Heart left ventricle (tissue), 16 donors: ENCODE measurements at regions of chr13 and their contacts with region 1.

Region 1: DNA sequence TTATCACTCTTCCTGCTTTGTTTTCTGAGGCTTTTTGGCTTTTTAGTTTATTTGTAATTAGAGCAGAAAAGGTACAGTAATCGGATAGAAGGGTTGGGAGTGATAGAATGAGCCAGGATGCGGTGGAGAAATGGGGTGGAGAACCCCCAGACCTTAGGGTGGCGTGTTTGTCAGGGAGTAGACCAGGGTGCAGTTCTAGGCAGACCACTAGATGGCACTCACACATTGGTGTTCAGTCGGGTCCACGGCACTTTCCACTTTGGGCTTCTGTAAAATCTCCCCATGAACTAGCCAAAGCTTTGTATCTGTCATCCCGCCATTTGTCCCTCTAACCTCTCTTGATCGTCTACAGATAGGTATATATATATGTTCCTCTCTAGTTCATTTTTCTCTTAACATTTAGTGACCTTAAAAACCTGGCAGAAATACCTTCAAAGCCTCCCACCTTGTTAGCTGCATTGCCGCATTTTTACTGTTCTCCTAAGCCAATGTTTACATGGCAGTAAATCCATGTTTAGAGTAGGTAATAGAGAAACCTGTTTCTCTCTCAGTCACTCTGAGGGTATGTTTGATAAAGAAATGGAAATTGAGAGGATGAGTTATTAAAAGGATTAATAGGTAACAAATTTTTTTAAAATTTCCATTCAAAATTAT is 154.9 kb downstream of the TM9SF2 start:
- DNase-seq: peak; percentile 61 to 75 (median 71)
- ATAC-seq: peak in 3 of 4 donors; percentile 68 to 75 (median 68)
- H3K4me3 ChIP-seq: peak overlapping the region in 1 of 12 donors; percentile 2
- H3K27ac ChIP-seq: no peak overlapping the region
- H3K4me1 ChIP-seq: peaks cover 0 to 33% (median 9%) of the 10 kb centered on the region in 12 donors
- H3K27me3 ChIP-seq: peaks cover 0 to 15% (median 0%) of the 10 kb centered on the region in 9 donors
- CTCF ChIP-seq: peak; percentile 80 to 95 (median 88)
- POLR2A ChIP-seq: no peak

Region 2: DNA sequence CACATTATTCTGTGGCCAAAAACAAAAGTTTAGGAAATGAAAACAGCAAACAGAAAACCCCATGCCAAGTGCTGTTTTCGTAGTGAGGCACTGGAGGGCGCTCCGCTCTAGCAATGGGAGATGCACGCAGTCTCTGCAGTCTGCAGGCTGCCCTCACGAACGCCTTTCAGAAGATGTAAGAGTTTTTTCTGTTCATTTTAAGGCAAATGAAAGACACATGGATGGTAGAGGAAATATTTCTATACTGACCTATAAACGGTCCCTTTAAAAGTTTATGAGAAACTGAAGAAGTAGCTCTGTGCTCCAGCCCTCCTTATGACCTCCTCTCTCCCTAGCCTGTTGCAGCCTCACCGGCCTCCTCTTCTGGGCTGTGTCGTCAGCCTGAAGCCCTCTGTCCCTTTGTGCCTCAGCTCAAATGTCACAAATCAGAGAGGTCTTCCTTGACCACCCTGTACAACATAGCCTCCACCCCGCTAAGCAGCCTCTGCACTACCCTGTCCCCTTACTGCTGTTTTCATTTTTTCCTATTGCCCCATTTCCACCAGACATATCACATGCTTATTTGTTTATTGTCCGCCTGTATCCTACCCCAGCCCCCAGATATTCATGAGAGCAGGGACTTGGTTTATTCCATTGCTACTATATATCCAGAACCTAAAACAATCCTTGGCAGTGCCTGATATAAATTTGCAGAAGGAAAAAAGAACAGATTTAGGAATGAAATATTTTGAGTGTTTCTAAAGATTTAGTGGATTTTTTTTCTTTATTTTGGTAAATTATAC is 38.6 kb before region 1 on chr13:
- intact Hi-C with region 1: loop called in 1 of 10 experiments (anchors 5 kb)
- DNase-seq: peak in 2 of 5 donors; percentile 30 to 46
- ATAC-seq: peak in 3 of 4 donors; percentile 53 to 71 (median 58)
- H3K4me3 ChIP-seq: peak overlapping the region in 1 of 12 donors; percentile 7
- H3K27ac ChIP-seq: no peak overlapping the region
- H3K4me1 ChIP-seq: peaks cover 0 to 15% (median 0%) of the 10 kb centered on the region in 12 donors
- H3K27me3 ChIP-seq: no peaks in the 10 kb centered on the region
- CTCF ChIP-seq: peak; percentile 23 to 76 (median 56)
- POLR2A ChIP-seq: no peak

Region 3: DNA sequence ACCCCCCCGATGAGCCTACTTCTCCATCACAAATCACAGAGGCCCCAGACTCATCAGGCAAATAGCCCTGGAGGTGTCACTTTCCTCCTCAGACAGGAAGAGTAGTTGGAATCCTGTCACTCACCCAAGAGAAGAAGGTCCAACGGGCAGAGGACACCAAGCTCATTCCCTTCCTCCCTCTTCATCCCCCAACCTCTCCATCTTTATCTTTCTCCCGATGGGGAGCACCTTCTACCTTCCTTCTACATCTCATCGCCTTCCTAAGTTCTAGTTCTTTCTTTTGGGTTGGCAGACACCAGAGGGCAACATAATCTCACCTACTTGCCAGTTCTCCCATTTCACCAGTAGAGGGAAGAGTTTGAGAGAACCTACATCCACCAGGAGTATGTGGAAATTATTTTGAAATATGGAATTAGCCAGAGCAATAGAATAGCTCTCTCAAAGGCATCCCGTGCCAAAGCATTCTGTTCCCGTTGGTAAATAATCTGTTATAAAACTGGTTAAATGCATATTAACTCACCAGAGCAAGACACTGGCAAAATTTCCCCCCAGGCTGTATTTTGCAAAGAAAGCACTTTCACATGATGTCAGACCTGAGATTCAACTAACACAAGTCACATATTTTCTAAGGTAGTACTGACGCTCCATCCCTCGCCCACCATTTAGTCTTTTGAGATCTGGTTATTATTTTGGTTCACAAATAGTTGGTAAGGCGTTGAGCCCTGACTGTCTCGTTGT is 260.3 kb after region 1 on chr13:
- intact Hi-C with region 1: loop called in 9 of 10 experiments (anchors 2 to 10 kb)
- DNase-seq: no peak
- ATAC-seq: peak in 3 of 4 donors; percentile 67 to 76 (median 69)
- H3K4me3 ChIP-seq: no peak overlapping the region
- H3K27ac ChIP-seq: no peak overlapping the region
- H3K4me1 ChIP-seq: no peaks in the 10 kb centered on the region
- H3K27me3 ChIP-seq: peaks cover 0 to 46% (median 8%) of the 10 kb centered on the region in 9 donors
- CTCF ChIP-seq: peak; percentile 61 to 88 (median 78)
- POLR2A ChIP-seq: no peak

Region 4: GRCh38 chr13:100235311-100235901 is 579.2 kb after region 1 on chr13:
- intact Hi-C with region 1: loop called (anchors 2 to 5 kb)
- DNase-seq: no peak
- ATAC-seq: no peak
- H3K4me3 ChIP-seq: peak overlapping the region in 1 of 12 donors; percentile 29
- H3K27ac ChIP-seq: no peak overlapping the region
- H3K4me1 ChIP-seq: peaks cover 0 to 25% (median 14%) of the 10 kb centered on the region in 12 donors
- H3K27me3 ChIP-seq: no peaks in the 10 kb centered on the region
- CTCF ChIP-seq: peak; percentile 33 to 74 (median 56)
- POLR2A ChIP-seq: no peak

Region 5: DNA sequence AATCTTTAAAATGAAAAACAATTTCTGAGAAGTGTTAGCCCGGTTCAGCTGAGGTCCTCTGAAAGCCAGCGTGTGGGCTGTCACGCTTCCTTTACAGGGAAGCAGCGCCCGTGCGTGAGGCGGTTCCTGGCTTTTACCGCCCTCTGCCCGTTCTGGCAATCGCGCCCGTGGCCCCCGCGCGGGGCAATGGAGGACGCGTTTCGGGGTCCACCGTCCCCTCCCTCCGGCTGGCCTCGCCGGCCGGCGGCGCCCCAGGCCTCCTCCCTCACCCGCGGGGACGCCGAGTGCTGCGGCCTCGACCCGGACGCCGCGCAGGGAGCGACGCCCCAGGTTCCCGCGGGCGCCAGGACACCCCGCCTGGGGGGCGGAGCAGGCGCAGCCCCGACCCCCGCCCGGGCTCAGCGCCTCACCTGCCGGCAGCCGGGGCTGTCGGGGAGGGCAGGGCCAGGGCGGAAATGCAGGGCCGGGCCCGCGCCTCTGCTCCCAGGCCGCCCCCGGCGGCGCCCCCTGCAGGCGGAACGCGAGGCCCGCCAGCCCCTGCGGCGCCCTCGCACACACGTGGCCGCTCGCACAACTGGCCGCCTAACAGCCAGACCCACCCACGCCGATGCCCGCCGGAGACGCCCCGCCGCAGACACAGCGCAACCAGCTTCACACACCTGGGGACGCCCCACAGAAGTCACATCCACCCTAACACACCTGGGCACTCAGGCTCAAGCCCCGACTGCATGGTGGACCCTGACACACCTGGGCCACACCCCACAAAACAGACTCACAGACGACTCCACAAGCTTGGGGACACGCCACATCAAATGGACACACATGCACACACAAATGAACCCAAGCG is 932.3 kb after region 1 on chr13 and contains the start of gene GGACT:
- intact Hi-C with region 1: loop called in 1 of 10 experiments (anchors 5 kb)
- DNase-seq: peak; percentile 66 to 90 (median 72)
- ATAC-seq: peak; percentile 73 to 98 (median 93)
- H3K4me3 ChIP-seq: peak within 1 kb of the TSS; percentile 57 to 81 (median 69)
- H3K27ac ChIP-seq: peak within 1 kb of the TSS; percentile 30 to 88 (median 68)
- H3K4me1 ChIP-seq: peaks cover 0 to 18% (median 5%) of the 10 kb centered on the region in 12 donors
- H3K27me3 ChIP-seq: no peaks in the 10 kb centered on the region
- CTCF ChIP-seq: peak; percentile 49 to 84 (median 69)
- POLR2A ChIP-seq: no peak
- total RNA-seq, gene GGACT: 1.00 to 3.9 (median 1.4) TPM

Region 6: DNA sequence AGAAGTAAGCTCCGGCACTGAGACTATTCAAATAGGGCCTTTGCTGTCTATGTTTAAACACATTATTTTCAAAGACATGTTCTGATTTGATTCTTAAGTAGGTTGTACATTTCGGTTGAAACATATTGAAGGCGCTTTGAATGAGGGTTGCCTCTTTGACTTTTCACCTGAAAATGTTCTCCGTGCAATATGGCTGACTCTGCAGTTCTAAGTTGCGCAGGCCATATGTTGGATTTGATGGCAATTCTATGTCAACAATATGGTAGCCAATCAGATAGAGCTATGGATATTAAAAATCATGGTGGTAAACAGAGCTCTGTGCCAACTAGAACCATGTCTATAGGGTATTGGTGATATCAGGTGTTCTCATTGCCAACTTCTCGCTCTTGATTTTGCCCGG is 1452.8 kb after region 1 on chr13:
- intact Hi-C with region 1: loop called in 4 of 10 experiments (anchors 10 kb)
- DNase-seq: no peak
- ATAC-seq: no peak
- H3K4me3 ChIP-seq: no peak overlapping the region
- H3K27ac ChIP-seq: no peak overlapping the region
- H3K4me1 ChIP-seq: no peaks in the 10 kb centered on the region
- H3K27me3 ChIP-seq: no peaks in the 10 kb centered on the region
- CTCF ChIP-seq: no peak
- POLR2A ChIP-seq: no peak